A549 (cell line): ENCODE measurements at regions of chr6 and their contacts with region 1.

Region 1: GRCh38 chr6:37102279-37103168 is 67.4 kb upstream of the PIM1 start:
- DNase-seq: peak; percentile 48 to 82
- ATAC-seq: peak; percentile 90
- H3K4me3 ChIP-seq: peak overlapping the region; percentile 30
- H3K27ac ChIP-seq: peak overlapping the region; percentile 72 to 89
- H3K4me1 ChIP-seq: peaks cover 44% of the 10 kb centered on the region
- CTCF ChIP-seq: no peak; the same call in 2 of the 3 replicates
- EP300 ChIP-seq: peak in 1 of 2 experiments; percentile 17; a peak in 1 of 5 replicates
- POLR2A ChIP-seq: peak; percentile 34; the same call in 1 of the 2 replicates
- RAD21 ChIP-seq: peak in 1 of 2 experiments; percentile 17; a peak in 1 of 5 replicates

Region 2: DNA sequence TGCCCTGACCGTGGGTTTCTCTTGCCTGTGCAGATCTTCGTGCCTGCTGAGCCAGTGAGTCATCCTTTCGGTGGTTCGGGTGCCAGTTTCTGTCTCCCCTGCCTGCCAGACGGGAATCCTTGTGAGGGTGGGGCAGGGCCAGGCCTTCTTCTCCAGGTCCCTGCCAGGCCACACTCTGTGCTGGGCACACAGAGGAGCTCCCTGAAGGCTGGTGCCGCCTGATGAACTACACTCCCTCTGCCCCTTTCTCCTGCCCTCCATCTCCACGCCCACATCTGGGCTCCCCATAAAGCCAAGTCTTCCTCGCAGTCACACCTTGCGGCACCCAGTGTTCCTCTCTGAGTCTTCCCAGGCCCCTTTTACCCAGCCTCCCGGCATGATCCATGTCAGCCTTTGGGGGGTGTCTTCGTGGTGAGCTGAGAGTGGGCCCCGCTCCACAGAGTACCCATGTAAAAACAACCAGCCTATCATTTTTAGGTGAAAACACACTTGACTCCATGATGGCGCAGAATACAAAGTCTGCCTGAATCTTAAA is 77.7 kb before region 1 on chr6:
- CTCF ChIA-PET with region 1: no interaction called
- POLR2A ChIA-PET with region 1: no interaction called
- DNase-seq: peak; percentile 49 to 74
- ATAC-seq: peak; percentile 60 to 67; a peak in 5 of 6 replicates
- H3K4me3 ChIP-seq: no peak overlapping the region
- H3K27ac ChIP-seq: peak overlapping the region; percentile 72 to 87
- H3K4me1 ChIP-seq: peaks cover 41% of the 10 kb centered on the region
- CTCF ChIP-seq: no peak
- EP300 ChIP-seq: no peak
- POLR2A ChIP-seq: no peak
- RAD21 ChIP-seq: no peak

Region 3: DNA sequence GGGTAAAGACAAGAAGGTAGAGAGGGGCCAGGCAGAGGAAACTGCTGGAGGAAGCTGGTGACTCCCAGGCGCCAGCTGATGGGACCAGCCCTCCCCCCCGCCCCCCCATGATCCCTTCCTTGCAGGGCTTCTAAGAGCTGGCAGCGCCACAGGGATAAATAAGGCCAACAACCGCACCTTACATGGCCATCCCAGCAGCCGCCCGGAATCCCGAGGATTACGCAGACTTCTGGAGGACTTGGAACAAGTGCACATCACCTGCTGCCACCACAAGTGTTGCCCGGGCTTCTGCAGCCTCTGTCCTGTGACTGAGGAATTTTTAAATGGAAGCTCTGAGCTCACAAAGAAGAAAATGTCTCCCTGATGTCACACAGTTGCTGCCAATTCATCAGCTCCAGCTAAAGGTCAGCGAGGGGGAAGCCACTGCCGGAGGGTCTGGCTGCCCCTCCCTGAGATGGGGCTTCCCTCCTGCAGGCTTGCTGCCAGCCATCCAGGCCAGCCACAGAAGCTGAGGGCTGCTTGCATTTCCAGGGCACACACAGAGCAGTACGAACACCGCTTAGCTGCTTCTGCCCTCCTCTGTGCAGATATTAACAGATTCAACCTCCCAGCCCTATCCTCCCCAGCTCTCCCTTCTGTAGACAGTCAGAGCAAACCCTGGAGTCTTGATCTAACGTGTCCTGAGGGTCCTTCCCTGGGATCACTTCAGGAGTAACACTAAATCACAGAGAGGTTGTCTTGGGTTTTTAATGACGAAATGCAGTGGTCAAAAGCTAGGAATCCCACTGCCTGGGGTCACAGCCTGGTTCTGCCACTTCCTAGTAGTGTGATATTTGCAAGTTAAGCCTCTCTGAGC is 28.8 kb after region 1 on chr6:
- CTCF ChIA-PET with region 1: interaction called, 8 read pairs
- POLR2A ChIA-PET with region 1: interaction called, 11 read pairs
- DNase-seq: peak; percentile 37 to 88
- ATAC-seq: peak; percentile 41 to 57
- H3K4me3 ChIP-seq: peak overlapping the region; percentile 23; the same call in 1 of the 3 replicates
- H3K27ac ChIP-seq: peak overlapping the region; percentile 83 to 93
- H3K4me1 ChIP-seq: peaks cover 87% of the 10 kb centered on the region
- CTCF ChIP-seq: no peak
- EP300 ChIP-seq: no peak
- POLR2A ChIP-seq: no peak
- RAD21 ChIP-seq: peak in 1 of 2 experiments; percentile 7; a peak in 1 of 5 replicates

Region 4: GRCh38 chr6:37137201-37138090 is 34.9 kb after region 1 on chr6:
- CTCF ChIA-PET with region 1: interaction called, 3 read pairs
- POLR2A ChIA-PET with region 1: interaction called, 10 read pairs
- DNase-seq: peak; percentile 85 to 94
- ATAC-seq: peak; percentile 68 to 76
- H3K4me3 ChIP-seq: peak overlapping the region; percentile 32
- H3K27ac ChIP-seq: peak overlapping the region; percentile 93 to 96
- H3K4me1 ChIP-seq: peaks cover 82% of the 10 kb centered on the region
- CTCF ChIP-seq: no peak
- EP300 ChIP-seq: peak; percentile 47 to 60; a peak in 2 of 5 replicates
- POLR2A ChIP-seq: no peak
- RAD21 ChIP-seq: no peak; a peak in 2 of 5 replicates